ENCODE measurements at regions of chr9 and their contacts with region 1.

Region 1: DNA sequence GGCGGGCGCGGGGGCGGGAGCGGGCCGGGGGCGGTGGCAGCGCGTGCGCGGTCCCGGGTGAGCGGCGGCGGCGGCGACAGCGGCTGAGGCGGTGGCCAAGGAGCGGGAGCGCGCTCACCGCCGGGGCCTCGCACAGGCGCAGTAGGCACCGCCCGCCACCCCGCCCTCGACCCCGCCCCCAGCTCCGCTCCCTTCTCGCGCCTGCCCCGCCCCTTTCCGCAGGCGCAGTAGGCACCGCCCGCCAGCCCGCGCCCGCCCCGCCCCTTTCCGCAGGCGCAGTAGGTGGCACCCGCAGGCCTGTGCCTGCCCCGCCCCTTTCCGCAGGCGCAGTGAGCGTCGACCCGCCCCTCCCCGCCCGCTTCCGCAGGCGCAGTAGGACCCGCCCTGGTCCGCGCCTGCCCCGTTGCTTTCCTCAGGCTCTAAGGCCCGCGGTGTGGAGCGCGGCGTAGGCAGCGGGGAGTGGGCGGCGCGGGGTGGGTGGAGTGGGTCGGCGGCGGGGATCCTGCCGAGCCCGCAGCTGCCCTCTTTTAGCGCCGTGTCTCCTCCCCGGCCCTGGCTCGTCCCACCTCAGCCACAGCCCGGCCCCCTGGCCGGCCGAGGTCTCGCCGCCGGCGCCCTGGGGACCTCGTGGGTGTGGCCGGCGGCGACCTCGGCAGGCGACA is at the start of gene CAMSAP1:
- DNase-seq: peak; percentile 92 to 96
- ATAC-seq: peak; percentile 96 to 99 (median 98)
- H3K4me3 ChIP-seq: peak within 1 kb of the TSS; percentile 68 to 89 (median 86)
- H3K27ac ChIP-seq: peak within 1 kb of the TSS; percentile 74 to 94 (median 92)
- H3K4me1 ChIP-seq: peaks cover 4 to 58% (median 49%) of the 10 kb centered on the region in 9 donors
- H3K27me3 ChIP-seq: no peaks in the 10 kb centered on the region
- CTCF ChIP-seq: no peak
- total RNA-seq, gene CAMSAP1: 15.6 to 25.0 (median 20.6) TPM

Region 2: DNA sequence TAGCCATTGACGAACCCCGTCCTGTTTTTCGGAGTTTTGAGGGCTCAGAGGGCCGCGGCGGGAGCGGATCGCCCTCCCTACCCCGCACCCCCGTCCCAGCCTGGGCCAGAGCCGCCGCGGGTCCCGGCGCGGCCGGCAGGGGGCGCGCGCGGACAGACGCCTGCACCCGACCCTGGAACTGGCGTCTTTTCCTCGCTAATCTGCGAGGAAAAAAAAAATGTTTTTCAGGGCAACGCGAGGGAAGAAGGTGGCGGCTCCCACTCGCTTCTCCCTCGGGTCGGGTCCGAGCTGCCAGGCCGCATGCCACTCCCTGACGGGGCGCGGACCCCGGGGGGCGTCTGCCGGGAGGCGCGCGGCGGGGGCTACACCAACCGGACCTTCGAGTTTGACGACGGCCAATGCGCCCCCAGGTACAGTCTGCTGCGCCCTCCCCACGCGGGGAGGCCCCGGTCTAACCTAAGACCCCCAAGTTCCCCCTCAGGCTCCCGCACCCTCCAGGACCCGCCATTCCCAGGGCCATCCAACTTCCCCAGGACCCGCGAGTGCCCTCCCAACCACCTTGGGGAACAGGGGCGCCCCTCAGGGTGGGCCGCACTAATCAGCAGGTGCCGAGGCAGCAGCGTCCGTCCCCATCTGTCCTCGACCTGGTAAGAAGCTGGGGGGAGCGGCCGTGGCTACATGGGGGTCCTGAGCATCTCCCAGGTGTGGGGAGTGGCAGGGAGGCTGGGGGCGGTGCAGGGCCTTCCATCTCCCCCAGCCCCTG is 205.4 kb before region 1 on chr9 and contains the start of gene KCNT1:
- intact Hi-C with region 1: loop called in 1 of 10 experiments (anchors 5 kb)
- DNase-seq: peak; percentile 16 to 60
- ATAC-seq: peak in 3 of 8 donors; percentile 44 to 62 (median 54)
- H3K4me3 ChIP-seq: peak within 1 kb of the TSS in 7 of 10 donors; percentile 7 to 38 (median 20)
- H3K27ac ChIP-seq: no peak within 1 kb of the TSS
- H3K4me1 ChIP-seq: peaks cover 0 to 28% (median 11%) of the 10 kb centered on the region in 9 donors
- H3K27me3 ChIP-seq: peaks cover 5 to 50% (median 43%) of the 10 kb centered on the region in 7 donors
- CTCF ChIP-seq: peak; percentile 75 to 96 (median 92)
- total RNA-seq, gene KCNT1: 1.9 to 14.1 (median 4.8) TPM

Region 3: GRCh38 chr9:135864447-135865049 is 43.0 kb before region 1 on chr9:
- intact Hi-C with region 1: loop called in 6 of 10 experiments (anchors 5 kb)
- DNase-seq: peak; percentile 66 to 71
- ATAC-seq: peak in 6 of 8 donors; percentile 11 to 77 (median 38)
- H3K4me3 ChIP-seq: no peak overlapping the region
- H3K27ac ChIP-seq: no peak overlapping the region
- H3K4me1 ChIP-seq: peaks cover 0 to 12% (median 6%) of the 10 kb centered on the region in 9 donors
- H3K27me3 ChIP-seq: no peaks in the 10 kb centered on the region
- CTCF ChIP-seq: peak; percentile 71 to 92 (median 86)

Region 4: GRCh38 chr9:135926402-135927194 is 19.0 kb after region 1 on chr9:
- intact Hi-C with region 1: no loop called
- DNase-seq: peak in 1 of 2 donors; percentile 21
- ATAC-seq: peak in 7 of 8 donors; percentile 20 to 86 (median 49)
- H3K4me3 ChIP-seq: no peak overlapping the region
- H3K27ac ChIP-seq: peak overlapping the region in 4 of 10 donors; percentile 14 to 44 (median 27)
- H3K4me1 ChIP-seq: peaks cover 0 to 17% (median 9%) of the 10 kb centered on the region in 9 donors
- H3K27me3 ChIP-seq: no peaks in the 10 kb centered on the region
- CTCF ChIP-seq: no peak

Region 5: GRCh38 chr9:135939351-135940265 is 32.0 kb after region 1 on chr9:
- intact Hi-C with region 1: loop called in 2 of 10 experiments (anchors 5 kb)
- DNase-seq: no peak
- ATAC-seq: peak in 1 of 8 donors; percentile 33
- H3K4me3 ChIP-seq: no peak overlapping the region
- H3K27ac ChIP-seq: no peak overlapping the region
- H3K4me1 ChIP-seq: peaks cover 3 to 24% (median 14%) of the 10 kb centered on the region in 9 donors
- H3K27me3 ChIP-seq: no peaks in the 10 kb centered on the region
- CTCF ChIP-seq: no peak

Region 6: DNA sequence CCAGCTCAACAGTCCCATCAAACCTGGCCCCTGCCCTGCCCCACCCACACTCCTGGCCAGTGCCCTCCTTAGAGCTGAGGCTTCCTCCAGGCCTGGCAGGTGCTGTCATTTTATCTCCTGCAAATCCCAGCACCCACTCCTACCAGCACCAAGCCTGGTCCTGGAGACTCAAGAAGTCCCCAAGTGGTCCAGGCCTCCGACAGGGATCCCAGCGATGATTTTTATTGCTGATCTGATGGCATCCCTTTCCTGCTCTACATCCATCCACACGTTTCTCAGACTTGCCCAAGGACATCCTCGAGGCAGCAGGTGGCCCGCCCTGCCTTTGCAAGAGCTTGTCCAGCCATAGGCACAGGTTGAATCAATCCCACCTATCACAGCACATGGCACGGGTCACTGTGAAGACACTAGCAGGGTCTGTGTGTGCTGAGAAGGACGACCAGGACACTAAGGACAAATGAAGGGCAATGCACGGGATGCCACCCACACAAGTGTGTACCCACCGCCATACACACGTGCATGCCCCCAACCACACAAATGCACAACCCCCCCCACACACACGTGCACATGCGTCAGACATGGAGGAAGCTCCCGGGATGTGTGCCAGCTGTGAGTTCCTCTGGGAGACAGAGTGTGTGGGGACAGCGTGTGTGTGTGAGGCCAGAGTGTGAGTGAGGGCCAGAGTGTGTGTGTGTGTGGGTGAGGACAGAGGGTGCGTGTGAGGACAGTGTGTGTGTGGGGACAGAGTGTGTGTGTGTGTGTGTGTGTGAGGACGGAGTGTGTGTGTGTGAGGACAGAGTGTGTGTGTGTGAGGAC is 116.1 kb after region 1 on chr9:
- intact Hi-C with region 1: no loop called
- DNase-seq: peak; percentile 75 to 82
- ATAC-seq: peak; percentile 58 to 86 (median 78)
- H3K4me3 ChIP-seq: no peak overlapping the region
- H3K27ac ChIP-seq: peak overlapping the region in 3 of 10 donors; percentile 10 to 71 (median 23)
- H3K4me1 ChIP-seq: peaks cover 0 to 35% (median 24%) of the 10 kb centered on the region in 9 donors
- H3K27me3 ChIP-seq: no peaks in the 10 kb centered on the region
- CTCF ChIP-seq: no peak